A549 (cell line): ENCODE measurements at regions of chr2 and their contacts with region 1.

Region 1: DNA sequence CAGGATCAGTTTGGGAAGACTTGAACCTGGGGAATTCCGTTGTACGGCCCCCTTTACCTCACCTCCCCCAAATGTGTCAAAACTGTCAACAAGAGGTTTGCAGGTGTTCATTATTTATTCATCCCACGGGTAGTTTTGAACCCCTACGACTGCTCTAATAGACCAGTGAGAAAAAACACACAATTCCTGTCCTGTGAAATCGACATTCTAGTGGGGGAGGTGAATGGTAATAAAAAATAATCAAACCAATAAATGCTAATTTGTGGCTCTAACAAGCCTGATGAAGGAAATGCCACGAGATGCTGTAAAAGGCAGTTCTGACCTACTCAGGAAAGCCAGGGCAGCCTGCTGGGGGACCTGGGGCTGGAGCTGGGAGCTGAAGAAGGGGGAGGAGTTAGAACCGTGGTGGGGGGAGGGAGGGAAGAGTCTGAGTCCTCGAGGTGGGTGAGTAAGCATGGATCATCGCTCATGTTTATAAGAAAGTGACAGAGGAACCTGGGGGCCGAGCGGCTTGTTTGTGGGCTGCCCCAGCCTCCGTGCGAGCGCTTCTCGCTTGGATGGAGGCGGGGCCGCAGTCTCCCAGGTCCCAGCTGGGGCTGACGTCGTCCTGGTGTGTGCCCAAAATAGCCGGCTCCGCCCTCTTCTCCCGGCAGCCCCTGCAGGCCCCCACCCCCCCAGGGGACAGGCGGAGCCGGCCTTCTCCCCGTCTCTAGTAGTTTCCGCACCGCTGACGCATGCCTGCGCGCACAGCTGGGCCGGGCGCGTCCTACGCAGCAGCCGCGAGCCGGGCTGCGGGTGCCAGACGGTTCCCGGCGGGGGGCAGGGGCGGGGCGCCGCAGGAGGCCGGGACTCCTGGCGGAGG is at the start of gene DNAJB2:
- DNase-seq: peak; percentile 97
- ATAC-seq: peak; percentile 74 to 85
- H3K4me3 ChIP-seq: peak within 1 kb of the TSS; percentile 66
- H3K27ac ChIP-seq: peak within 1 kb of the TSS; percentile 96 to 99
- H3K4me1 ChIP-seq: peaks cover 58% of the 10 kb centered on the region
- CTCF ChIP-seq: no peak
- EP300 ChIP-seq: peak; percentile 29 to 75; a peak in 1 of 5 replicates
- POLR2A ChIP-seq: peak; percentile 52
- RAD21 ChIP-seq: no peak; a peak in 1 of 5 replicates
- polyA plus RNA-seq, gene DNAJB2: 25.6 and 31.0 TPM in 2 replicates

Region 2: GRCh38 chr2:218993345-218994315 is 285.3 kb before region 1 on chr2 and contains the start of gene CRYBA2:
- CTCF ChIA-PET with region 1: no interaction called
- POLR2A ChIA-PET with region 1: no interaction called
- DNase-seq: no peak
- ATAC-seq: no peak
- H3K4me3 ChIP-seq: no peak within 1 kb of the TSS
- H3K27ac ChIP-seq: no peak within 1 kb of the TSS
- H3K4me1 ChIP-seq: peaks cover 10% of the 10 kb centered on the region
- CTCF ChIP-seq: no peak
- EP300 ChIP-seq: no peak
- POLR2A ChIP-seq: no peak
- RAD21 ChIP-seq: no peak
- polyA plus RNA-seq, gene CRYBA2: not detected in 2 replicates

Region 3: DNA sequence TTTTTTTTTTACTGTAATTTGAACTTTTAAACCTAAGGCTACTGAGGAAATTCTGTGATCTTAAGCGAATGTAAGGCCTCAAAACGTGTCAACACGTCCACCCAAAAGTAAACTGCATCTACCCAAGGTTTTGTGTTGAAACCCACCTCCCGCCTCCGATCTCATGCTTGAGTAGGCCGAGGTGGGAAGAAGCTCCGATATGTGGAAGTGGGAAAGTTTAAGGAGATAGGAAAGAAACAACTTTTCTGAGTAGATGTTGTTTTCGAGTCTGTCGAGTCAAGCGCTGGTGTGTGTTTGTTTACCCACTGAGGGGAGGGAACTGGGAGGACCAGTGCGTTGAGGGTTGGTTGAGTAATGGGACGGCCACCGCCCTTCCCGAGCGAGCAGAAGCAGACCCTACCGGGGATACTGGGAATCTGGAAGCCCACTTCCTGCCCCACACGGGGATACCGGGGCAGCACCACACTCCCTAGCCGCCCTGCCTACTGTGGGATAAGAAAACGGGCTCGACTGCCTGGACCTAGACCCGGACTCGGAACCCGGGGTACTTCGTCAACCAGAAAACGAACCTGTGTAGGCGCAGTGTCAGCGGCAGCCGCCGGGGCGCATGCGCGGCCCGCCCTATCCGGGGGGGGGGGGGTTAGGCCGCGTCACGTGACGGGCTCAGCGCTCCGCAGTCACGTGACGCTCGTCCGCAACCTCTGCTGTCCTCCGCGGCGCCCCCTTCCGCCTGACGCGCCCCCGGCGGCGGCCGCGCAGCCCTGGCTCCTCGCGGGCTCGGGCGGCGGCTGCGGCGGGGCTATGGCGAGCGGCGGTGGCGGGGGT is 101.1 kb before region 1 on chr2 and contains the start of gene RETREG2:
- CTCF ChIA-PET with region 1: interaction called, 15 read pairs
- POLR2A ChIA-PET with region 1: interaction called, 7 read pairs
- DNase-seq: peak; percentile 87 to 94
- ATAC-seq: peak; percentile 83 to 88
- H3K4me3 ChIP-seq: peak within 1 kb of the TSS; percentile 84
- H3K27ac ChIP-seq: peak within 1 kb of the TSS; percentile 83 to 96
- H3K4me1 ChIP-seq: peaks cover 15% of the 10 kb centered on the region
- CTCF ChIP-seq: peak; percentile 54
- EP300 ChIP-seq: no peak
- POLR2A ChIP-seq: peak; percentile 69; the same call in 1 of the 2 replicates
- RAD21 ChIP-seq: no peak
- polyA plus RNA-seq, gene RETREG2: 67.5 and 83.2 TPM in 2 replicates

Region 4: GRCh38 chr2:219218732-219219701 is 59.9 kb before region 1 on chr2 and contains the start of gene ABCB6:
- CTCF ChIA-PET with region 1: interaction called, 65 read pairs
- POLR2A ChIA-PET with region 1: interaction called, 19 read pairs
- DNase-seq: peak; percentile 92
- ATAC-seq: peak; percentile 65 to 84
- H3K4me3 ChIP-seq: peak within 1 kb of the TSS; percentile 65
- H3K27ac ChIP-seq: peak within 1 kb of the TSS; percentile 92 to 95
- H3K4me1 ChIP-seq: peaks cover 30% of the 10 kb centered on the region
- CTCF ChIP-seq: no peak
- EP300 ChIP-seq: no peak
- POLR2A ChIP-seq: peak; percentile 94
- RAD21 ChIP-seq: no peak
- polyA plus RNA-seq, gene ABCB6: 62.5 and 71.0 TPM in 2 replicates

Region 5: DNA sequence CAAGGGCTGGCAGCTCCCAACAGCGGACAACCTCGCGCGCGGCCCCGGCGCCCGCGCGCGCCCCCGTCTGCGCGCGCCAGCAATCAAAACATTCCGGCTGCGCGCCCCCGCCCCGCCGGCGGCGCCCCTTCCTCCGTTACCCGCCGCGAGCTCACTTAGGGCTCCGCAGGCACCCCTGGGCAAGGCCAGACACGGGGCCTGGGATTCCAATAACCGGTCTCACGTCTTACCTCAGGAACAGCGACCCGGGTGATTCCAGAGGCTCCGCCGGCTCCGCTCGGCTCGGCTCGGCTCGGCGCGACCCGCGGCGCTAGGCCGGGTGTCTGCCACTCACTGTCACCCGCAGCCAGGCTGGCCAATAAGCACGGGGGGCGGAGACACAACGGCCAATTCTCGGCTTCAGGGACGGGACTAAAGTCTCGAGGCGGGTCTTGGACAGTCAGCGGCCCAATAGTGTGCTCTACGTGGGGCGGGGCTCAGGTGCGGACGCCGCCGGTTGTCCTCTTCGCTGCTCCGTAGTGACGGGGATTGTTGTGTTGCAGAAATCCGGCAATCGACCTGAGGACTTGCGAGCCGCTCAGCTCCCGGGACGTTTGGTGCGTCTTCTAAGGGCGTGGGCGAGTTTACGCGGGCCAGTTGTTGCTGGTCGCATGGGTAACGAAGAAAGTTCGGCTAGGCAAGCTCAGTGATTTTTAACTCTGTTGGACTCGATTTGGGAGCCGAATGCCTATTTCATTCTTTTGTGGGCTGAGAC is 49.4 kb before region 1 on chr2 and contains the starts of genes ANKZF1 and ATG9A:
- CTCF ChIA-PET with region 1: interaction called, 12 read pairs
- POLR2A ChIA-PET with region 1: interaction called, 8 read pairs
- DNase-seq: peak; percentile 97 to 99
- ATAC-seq: peak; percentile 96 to 99
- H3K4me3 ChIP-seq: peak within 1 kb of the TSS; percentile 85
- H3K27ac ChIP-seq: peak within 1 kb of the TSS; percentile 82 to 95
- H3K4me1 ChIP-seq: peaks cover 19% of the 10 kb centered on the region
- CTCF ChIP-seq: no peak
- EP300 ChIP-seq: no peak
- POLR2A ChIP-seq: peak; percentile 53
- RAD21 ChIP-seq: no peak; a peak in 1 of 5 replicates
- polyA plus RNA-seq, gene ANKZF1: 29.5 and 30.3 TPM in 2 replicates
- polyA plus RNA-seq, gene ATG9A: 75.2 and 115 TPM in 2 replicates

Region 6: GRCh38 chr2:219245148-219245898 is 33.6 kb before region 1 on chr2 and contains the starts of genes GLB1L and STK16:
- CTCF ChIA-PET with region 1: interaction called, 214 read pairs
- POLR2A ChIA-PET with region 1: interaction called, 34 read pairs
- DNase-seq: peak; percentile 94
- ATAC-seq: peak; percentile 64 to 82
- H3K4me3 ChIP-seq: peak within 1 kb of the TSS; percentile 78
- H3K27ac ChIP-seq: peak within 1 kb of the TSS; percentile 90 to 96
- H3K4me1 ChIP-seq: peaks cover 50% of the 10 kb centered on the region
- CTCF ChIP-seq: no peak
- EP300 ChIP-seq: no peak
- POLR2A ChIP-seq: peak; percentile 74
- RAD21 ChIP-seq: no peak; a peak in 1 of 5 replicates
- polyA plus RNA-seq, gene GLB1L: 8.7 and 10.0 TPM in 2 replicates
- polyA plus RNA-seq, gene STK16: 43.3 and 53.0 TPM in 2 replicates

Region 7: DNA sequence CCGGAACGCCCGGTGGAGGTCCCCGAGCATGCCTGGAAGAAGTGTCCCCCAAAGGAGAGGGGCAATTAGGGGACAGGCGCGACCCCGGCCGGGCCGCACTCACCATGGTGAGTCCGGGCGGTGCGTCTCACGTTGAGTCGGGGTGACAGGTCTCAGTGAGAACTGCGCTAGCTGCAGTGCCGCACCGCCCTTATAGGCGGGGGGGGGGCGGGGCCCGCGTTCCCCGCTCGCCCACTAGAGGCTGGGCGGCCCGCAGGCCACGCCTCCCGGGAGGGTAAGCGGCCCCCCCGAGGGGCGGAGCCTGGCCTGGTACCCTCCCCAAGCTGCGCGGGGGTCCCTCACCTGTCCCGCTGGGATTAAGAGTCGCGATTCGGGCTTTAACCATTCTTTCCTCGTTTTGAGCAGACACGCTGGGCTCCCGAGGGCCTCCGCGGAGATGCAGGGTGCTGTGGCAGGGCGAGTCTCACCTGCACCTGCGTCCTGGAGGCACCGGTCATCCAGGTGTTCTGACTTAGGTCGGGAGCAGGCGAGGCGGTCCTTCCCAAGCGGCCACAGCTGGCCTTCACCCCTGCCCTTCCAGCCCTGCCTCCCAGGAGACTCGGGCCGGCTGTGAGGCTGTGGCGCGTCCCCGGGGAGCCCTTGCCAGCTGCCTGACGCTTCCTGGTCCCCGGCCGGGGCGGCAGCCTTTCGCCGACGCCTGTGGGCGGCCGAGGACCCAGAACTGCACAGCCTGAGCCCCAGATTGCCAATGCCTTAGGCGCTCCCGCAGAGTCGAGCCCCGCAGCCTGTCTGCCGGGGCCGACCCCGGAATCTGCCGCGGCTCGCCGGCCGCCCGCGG is 24.9 kb before region 1 on chr2 and contains the start of gene TUBA4A:
- CTCF ChIA-PET with region 1: interaction called, 214 read pairs
- POLR2A ChIA-PET with region 1: interaction called, 65 read pairs
- DNase-seq: peak; percentile 81 to 83
- ATAC-seq: peak; percentile 62 to 82
- H3K4me3 ChIP-seq: peak within 1 kb of the TSS; percentile 71
- H3K27ac ChIP-seq: peak within 1 kb of the TSS; percentile 90
- H3K4me1 ChIP-seq: peaks cover 37% of the 10 kb centered on the region
- CTCF ChIP-seq: no peak
- EP300 ChIP-seq: no peak
- POLR2A ChIP-seq: peak; percentile 99
- RAD21 ChIP-seq: no peak
- polyA plus RNA-seq, gene TUBA4A: 222 and 251 TPM in 2 replicates

Region 8: DNA sequence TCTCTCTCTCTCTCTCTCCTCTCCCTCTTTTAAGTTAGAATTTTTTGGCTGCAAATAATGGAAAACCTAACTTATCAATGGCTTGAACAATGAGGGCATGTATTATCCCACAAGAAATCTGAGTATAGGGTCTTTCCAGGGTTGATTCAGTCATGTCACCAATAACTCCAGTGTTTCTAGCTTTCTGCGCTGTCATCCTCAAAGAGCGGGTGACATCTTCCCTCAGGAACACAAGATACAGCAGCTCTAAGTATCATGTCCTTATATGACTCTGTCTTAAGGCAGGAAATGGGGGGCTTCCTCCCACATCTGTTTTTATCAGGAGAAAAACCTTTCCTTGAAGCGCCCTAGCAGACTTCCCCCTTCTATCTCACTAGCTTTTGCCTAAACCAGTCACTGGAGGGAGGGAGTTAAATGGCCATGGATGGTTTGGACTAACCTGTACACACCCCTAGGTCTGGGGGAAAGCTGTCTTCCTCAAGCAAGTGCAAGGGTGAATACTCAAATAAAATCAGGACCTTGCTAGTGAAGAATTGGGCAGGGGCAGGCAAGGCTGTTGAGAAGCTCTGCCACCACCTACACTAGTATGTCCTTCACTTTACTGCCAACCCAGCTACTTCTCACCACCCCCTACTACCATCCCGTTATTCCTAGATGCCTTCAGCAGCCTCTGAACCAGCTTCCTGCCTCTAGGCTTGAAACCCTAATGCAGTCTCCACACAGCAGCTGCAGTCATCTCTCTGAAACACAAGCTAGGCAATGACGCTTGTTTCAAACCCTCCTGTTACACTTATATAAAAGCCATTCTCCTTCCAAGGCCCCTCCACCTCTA is 17.6 kb before region 1 on chr2:
- CTCF ChIA-PET with region 1: interaction called, 214 read pairs
- POLR2A ChIA-PET with region 1: interaction called, 4 read pairs
- DNase-seq: no peak
- ATAC-seq: peak in 1 of 2 experiments; percentile 56; a peak in 3 of 6 replicates
- H3K4me3 ChIP-seq: no peak overlapping the region
- H3K27ac ChIP-seq: peak overlapping the region in 1 of 2 experiments; percentile 37; a peak in 1 of 6 replicates
- H3K4me1 ChIP-seq: no peaks in the 10 kb centered on the region
- CTCF ChIP-seq: no peak
- EP300 ChIP-seq: no peak
- POLR2A ChIP-seq: no peak
- RAD21 ChIP-seq: no peak

Region 9: GRCh38 chr2:219736209-219736608 is 457.3 kb after region 1 on chr2:
- CTCF ChIA-PET with region 1: no interaction called
- POLR2A ChIA-PET with region 1: no interaction called
- DNase-seq: peak; percentile 40 to 69
- ATAC-seq: peak; percentile 78 to 87
- H3K4me3 ChIP-seq: no peak overlapping the region
- H3K27ac ChIP-seq: no peak overlapping the region
- H3K4me1 ChIP-seq: no peaks in the 10 kb centered on the region
- CTCF ChIP-seq: peak; percentile 82
- EP300 ChIP-seq: no peak
- POLR2A ChIP-seq: no peak
- RAD21 ChIP-seq: peak; percentile 81 to 86